ENCODE measurements at regions of chr12 and their contacts with region 1.

Region 1: GRCh38 chr12:56189176-56189917 is at the start of gene SMARCC2:
- DNase-seq: peak; percentile 91 to 92
- ATAC-seq: peak; percentile 83 to 91
- H3K4me3 ChIP-seq: peak within 1 kb of the TSS; percentile 81
- H3K27ac ChIP-seq: peak within 1 kb of the TSS; percentile 93 to 99
- H3K4me1 ChIP-seq: peaks cover 13% of the 10 kb centered on the region
- CTCF ChIP-seq: peak; percentile 99
- EP300 ChIP-seq: no peak
- POLR2A ChIP-seq: peak; percentile 63
- RAD21 ChIP-seq: peak; percentile 39 to 41; a peak in 3 of 5 replicates
- polyA plus RNA-seq, gene SMARCC2: 83.9 and 109 TPM in 2 replicates

Region 2: DNA sequence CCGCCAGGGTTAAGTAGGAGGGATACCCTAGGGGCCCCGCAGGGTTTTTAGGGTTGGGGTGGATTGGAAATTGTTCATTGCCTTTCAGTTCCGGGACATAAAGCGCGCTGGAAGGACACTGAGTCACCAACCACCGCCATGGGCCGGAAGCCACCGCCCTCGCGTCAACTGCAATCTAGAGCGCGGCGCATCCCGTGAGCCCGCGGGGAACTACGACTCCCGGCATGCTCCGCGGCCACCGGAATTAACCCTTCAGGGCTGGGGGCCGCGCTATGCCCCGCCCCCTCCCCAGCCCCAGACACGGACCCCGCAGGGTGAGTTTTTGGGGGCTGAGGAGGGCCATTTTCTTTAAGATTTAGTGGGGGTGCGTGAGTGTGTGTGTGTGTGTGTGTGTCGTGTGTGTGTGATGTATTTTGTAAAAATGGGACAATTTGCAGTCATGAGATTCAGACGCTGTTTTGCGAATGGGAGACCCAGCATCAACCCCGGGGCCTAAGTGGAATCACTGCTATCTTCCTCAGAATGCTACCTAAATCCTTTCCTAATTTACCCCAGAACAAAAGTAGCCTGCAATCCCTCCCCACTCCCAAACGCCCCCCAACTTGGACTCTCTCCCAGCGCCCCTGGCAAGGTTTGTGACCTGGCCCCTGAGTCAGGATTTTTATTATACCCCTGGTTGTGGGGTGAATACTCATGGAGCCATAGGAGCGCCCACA is 36.9 kb before region 1 on chr12 and contains the start of gene MYL6B:
- CTCF ChIA-PET with region 1: interaction called, 19 read pairs
- POLR2A ChIA-PET with region 1: interaction called, 8 read pairs
- DNase-seq: peak; percentile 94
- ATAC-seq: peak; percentile 89 to 93
- H3K4me3 ChIP-seq: peak within 1 kb of the TSS; percentile 53
- H3K27ac ChIP-seq: peak within 1 kb of the TSS; percentile 92 to 93
- H3K4me1 ChIP-seq: peaks cover 21% of the 10 kb centered on the region; the same call in 2 of the 3 replicates
- CTCF ChIP-seq: no peak
- EP300 ChIP-seq: no peak
- POLR2A ChIP-seq: peak; percentile 71
- RAD21 ChIP-seq: no peak
- polyA plus RNA-seq, gene MYL6B: 48.2 and 67.0 TPM in 2 replicates

Region 3: DNA sequence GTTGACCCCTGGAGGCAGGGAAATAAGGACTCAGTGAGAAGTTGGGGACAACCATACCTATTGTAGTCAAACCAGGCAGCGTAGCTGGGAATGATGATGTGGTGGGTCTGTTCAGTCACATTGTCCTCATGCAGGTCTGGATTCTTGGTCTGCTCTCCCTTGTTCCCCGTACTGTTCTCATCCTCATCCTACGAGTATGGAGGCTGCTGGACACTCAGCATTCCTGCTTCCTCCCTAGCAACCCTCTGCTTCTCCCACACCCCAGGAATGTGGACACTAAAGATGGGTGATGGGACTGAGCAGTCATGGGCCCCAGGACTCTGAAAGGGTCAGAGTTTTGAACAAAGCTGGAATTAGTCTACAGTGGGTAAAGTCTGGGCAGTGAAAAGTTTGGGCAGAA is 11.0 kb before region 1 on chr12:
- CTCF ChIA-PET with region 1: interaction called, 42 read pairs
- POLR2A ChIA-PET with region 1: interaction called, 3 read pairs
- DNase-seq: no peak
- ATAC-seq: peak in 1 of 2 experiments; percentile 28; a peak in 3 of 6 replicates
- H3K4me3 ChIP-seq: no peak overlapping the region
- H3K27ac ChIP-seq: no peak overlapping the region
- H3K4me1 ChIP-seq: no peaks in the 10 kb centered on the region
- CTCF ChIP-seq: no peak
- EP300 ChIP-seq: no peak
- POLR2A ChIP-seq: no peak
- RAD21 ChIP-seq: no peak

Region 4: GRCh38 chr12:56230432-56231183 is 41.3 kb after region 1 on chr12:
- CTCF ChIA-PET with region 1: interaction called, 17 read pairs
- POLR2A ChIA-PET with region 1: no interaction called
- DNase-seq: no peak
- ATAC-seq: peak in 1 of 2 experiments; percentile 16; a peak in 2 of 6 replicates
- H3K4me3 ChIP-seq: no peak overlapping the region
- H3K27ac ChIP-seq: no peak overlapping the region
- H3K4me1 ChIP-seq: peaks cover 9% of the 10 kb centered on the region
- CTCF ChIP-seq: no peak
- EP300 ChIP-seq: no peak
- POLR2A ChIP-seq: no peak; the same call in 1 of the 2 replicates
- RAD21 ChIP-seq: no peak

Region 5: DNA sequence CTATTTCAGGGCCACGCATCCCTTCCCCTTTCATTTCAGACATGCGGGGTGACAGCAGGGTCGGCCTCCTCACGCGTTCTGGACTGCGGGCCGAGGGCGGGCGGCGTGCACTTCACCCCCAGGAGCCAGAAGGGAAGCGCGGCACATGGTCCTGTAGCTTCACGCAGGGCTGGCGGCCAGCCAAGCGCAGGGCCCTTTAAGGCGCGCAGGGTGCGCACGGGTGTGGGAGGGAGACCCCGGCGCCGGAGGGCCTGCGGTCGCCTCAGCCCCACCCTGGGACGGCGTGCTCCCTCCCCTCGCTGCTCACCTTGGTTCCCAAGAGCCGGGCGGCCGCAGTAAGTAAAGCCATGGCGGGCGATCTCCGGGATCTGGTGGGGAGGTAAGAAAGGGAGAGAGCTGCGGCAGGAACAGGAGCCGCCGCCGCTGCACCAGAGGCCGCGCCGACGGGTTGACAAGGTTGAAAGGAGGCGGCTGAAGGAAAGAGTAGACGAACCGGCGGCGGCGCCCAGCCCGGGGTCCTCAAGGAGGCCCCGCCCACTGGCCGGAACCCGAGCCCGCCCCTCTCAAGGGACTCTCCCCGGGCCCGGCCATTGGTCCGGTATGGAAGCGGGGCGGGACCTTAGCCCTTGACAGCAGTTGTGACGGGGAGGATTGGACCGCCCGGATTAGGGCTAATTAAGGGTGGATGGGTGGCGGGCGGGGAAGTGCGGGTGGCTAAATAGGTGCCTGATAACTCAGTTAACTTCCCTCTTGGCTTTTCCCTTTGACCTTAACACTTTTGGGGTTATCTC is 110.7 kb after region 1 on chr12 and contains the start of gene CS:
- CTCF ChIA-PET with region 1: interaction called, 13 read pairs
- POLR2A ChIA-PET with region 1: no interaction called
- DNase-seq: peak; percentile 94 to 98
- ATAC-seq: peak; percentile 94 to 97
- H3K4me3 ChIP-seq: peak within 1 kb of the TSS; percentile 69
- H3K27ac ChIP-seq: peak within 1 kb of the TSS; percentile 90 to 91
- H3K4me1 ChIP-seq: peaks cover 23% of the 10 kb centered on the region; the same call in 2 of the 3 replicates
- CTCF ChIP-seq: no peak
- EP300 ChIP-seq: no peak
- POLR2A ChIP-seq: peak; percentile 42
- RAD21 ChIP-seq: no peak
- polyA plus RNA-seq, gene CS: 223 and 263 TPM in 2 replicates

Measured in A549 (cell line).